AG04450 (cell line): ENCODE measurements at regions of chr1 and their contacts with region 1.

Region 1: GRCh38 chr1:226109829-226110248 is 47.3 kb downstream of the H3-3A start:
- DNase-seq: no peak
- H3K4me3 ChIP-seq: peak overlapping the region; percentile 59
- H3K27ac ChIP-seq: peak overlapping the region; percentile 65
- H3K27me3 ChIP-seq: no peaks in the 10 kb centered on the region
- CTCF ChIP-seq: no peak

Region 2: DNA sequence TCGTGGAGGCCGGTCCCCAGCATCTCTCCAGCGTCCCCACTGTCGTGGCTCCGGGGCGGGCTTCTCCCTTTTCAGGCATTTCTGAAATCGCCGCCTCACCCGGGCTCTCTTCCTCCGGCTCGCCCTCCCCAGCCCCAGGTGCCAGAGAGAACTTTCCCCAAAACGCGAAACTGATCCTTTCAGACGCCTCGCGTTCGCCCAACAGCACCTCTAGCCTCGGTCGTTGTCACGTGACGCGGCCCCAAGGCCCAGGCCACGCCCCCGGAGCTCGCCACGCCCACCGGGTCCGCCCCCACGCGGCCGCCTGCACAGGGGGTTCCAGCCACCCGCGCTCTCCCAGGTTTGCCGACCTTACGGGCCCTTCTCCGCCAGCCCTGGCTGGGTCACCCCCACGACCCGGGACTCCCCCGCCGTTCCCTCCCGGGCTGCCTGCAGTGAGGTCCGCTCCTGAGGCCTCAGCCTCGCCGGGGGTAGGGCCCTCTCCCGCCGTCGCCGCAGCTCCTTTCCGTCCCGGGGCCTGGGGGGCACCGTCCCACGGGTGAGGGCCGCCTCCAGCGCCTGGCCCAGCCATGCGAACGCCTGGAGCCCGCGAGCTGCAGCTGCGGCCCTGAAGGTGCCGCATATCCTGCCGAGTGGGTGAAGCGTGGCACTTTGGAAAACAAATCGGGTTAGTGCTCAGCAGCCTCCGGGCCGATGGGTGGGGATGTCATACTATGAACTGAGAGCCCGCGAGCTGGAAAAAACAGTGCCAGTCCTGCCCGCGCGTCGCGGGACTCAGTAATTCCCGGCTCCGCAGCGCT is 26.3 kb before region 1 on chr1:
- CTCF ChIA-PET with region 1: interaction called, 5 read pairs
- POLR2A ChIA-PET with region 1: interaction called, 13 read pairs
- DNase-seq: no peak
- H3K4me3 ChIP-seq: peak overlapping the region; percentile 68
- H3K27ac ChIP-seq: peak overlapping the region; percentile 61
- H3K27me3 ChIP-seq: no peaks in the 10 kb centered on the region
- CTCF ChIP-seq: no peak

Region 3: DNA sequence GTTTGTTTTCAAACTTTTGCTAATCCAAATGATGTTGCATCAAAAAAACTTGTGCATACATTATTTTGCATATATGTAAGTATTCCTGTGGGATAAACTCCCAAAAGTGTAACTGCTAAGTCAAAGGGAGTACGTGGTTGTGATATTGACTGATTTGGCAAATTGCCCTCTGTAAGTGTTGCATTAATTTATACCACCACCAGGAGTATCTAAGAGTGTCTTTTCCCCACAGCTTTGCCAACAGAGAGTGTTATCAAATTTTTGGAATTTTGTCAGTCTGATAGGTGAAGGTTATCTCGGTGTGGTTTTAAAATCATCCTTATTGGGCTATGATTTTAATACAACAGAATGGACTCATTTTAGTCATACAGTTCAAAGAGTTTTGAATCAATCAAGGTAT is 328.2 kb after region 1 on chr1:
- CTCF ChIA-PET with region 1: no interaction called
- POLR2A ChIA-PET with region 1: no interaction called
- DNase-seq: no peak
- H3K4me3 ChIP-seq: no peak overlapping the region
- H3K27ac ChIP-seq: no peak overlapping the region
- H3K27me3 ChIP-seq: peaks cover 4% of the 10 kb centered on the region
- CTCF ChIP-seq: no peak